B cell (primary cell): ENCODE measurements at regions of chr4 and their contacts with region 1.

Region 1: GRCh38 chr4:40238700-40239548 is 42.1 kb downstream of the RHOH start:
- DNase-seq: no peak
- ATAC-seq: peak; percentile 32
- H3K4me3 ChIP-seq: no peak overlapping the region
- H3K4me3 Mint-ChIP-seq: peak overlapping the region; percentile 27
- H3K27ac ChIP-seq: peak overlapping the region; percentile 3 to 60
- H3K27ac Mint-ChIP-seq: peak overlapping the region; percentile 83
- H3K4me1 ChIP-seq: peaks cover 74 to 80% of the 10 kb centered on the region in 2 donors
- H3K4me1 Mint-ChIP-seq: peaks cover 81% of the 10 kb centered on the region
- H3K27me3 ChIP-seq: no peaks in the 10 kb centered on the region
- H3K27me3 Mint-ChIP-seq: no peaks in the 10 kb centered on the region
- CTCF ChIP-seq: no peak

Region 2: GRCh38 chr4:39205000-39205399 is 1033.9 kb before region 1 on chr4:
- CTCF ChIA-PET with region 1: no interaction called
- POLR2A ChIA-PET with region 1: no interaction called
- intact Hi-C with region 1: no loop called
- DNase-seq: no peak
- ATAC-seq: no peak
- H3K4me3 ChIP-seq: no peak overlapping the region
- H3K4me3 Mint-ChIP-seq: no peak overlapping the region
- H3K27ac ChIP-seq: no peak overlapping the region
- H3K27ac Mint-ChIP-seq: no peak overlapping the region
- H3K4me1 ChIP-seq: no peaks in the 10 kb centered on the region
- H3K4me1 Mint-ChIP-seq: no peaks in the 10 kb centered on the region
- H3K27me3 ChIP-seq: no peaks in the 10 kb centered on the region
- H3K27me3 Mint-ChIP-seq: no peaks in the 10 kb centered on the region
- CTCF ChIP-seq: no peak

Region 3: GRCh38 chr4:40205259-40206198 is 33.4 kb before region 1 on chr4:
- CTCF ChIA-PET with region 1: interaction called, 10 read pairs
- POLR2A ChIA-PET with region 1: no interaction called
- intact Hi-C with region 1: loop called (anchors 5 kb)
- DNase-seq: peak; percentile 66
- ATAC-seq: peak; percentile 46
- H3K4me3 ChIP-seq: peak overlapping the region; percentile 21 to 61 (median 43)
- H3K4me3 Mint-ChIP-seq: peak overlapping the region; percentile 86
- H3K27ac ChIP-seq: peak overlapping the region; percentile 65 to 82
- H3K27ac Mint-ChIP-seq: peak overlapping the region; percentile 88
- H3K4me1 ChIP-seq: peaks cover 83 to 88% of the 10 kb centered on the region in 2 donors
- H3K4me1 Mint-ChIP-seq: peaks cover 87% of the 10 kb centered on the region
- H3K27me3 ChIP-seq: no peaks in the 10 kb centered on the region
- H3K27me3 Mint-ChIP-seq: no peaks in the 10 kb centered on the region
- CTCF ChIP-seq: no peak

Region 4: GRCh38 chr4:40212674-40213527 is 26.0 kb before region 1 on chr4:
- CTCF ChIA-PET with region 1: interaction called, 10 read pairs
- POLR2A ChIA-PET with region 1: no interaction called
- intact Hi-C with region 1: loop called (anchors 5 kb)
- DNase-seq: no peak
- ATAC-seq: no peak
- H3K4me3 ChIP-seq: no peak overlapping the region
- H3K4me3 Mint-ChIP-seq: peak overlapping the region; percentile 53
- H3K27ac ChIP-seq: peak overlapping the region in 1 of 2 donors; percentile 73
- H3K27ac Mint-ChIP-seq: peak overlapping the region; percentile 82
- H3K4me1 ChIP-seq: peaks cover 80 to 94% of the 10 kb centered on the region in 2 donors
- H3K4me1 Mint-ChIP-seq: peaks cover 92% of the 10 kb centered on the region
- H3K27me3 ChIP-seq: no peaks in the 10 kb centered on the region
- H3K27me3 Mint-ChIP-seq: no peaks in the 10 kb centered on the region
- CTCF ChIP-seq: no peak